ENCODE measurements at regions of chr6 and their contacts with region 1.

Region 1: GRCh38 chr6:42306439-42307140 is 88.9 kb upstream of the MRPS10 start:
- DNase-seq: no peak
- H3K4me3 ChIP-seq: no peak overlapping the region
- H3K4me3 Mint-ChIP-seq: no peak overlapping the region
- H3K27ac ChIP-seq: no peak overlapping the region
- H3K27ac Mint-ChIP-seq: peak overlapping the region in 2 of 8 donors; percentile 43 to 71
- H3K4me1 ChIP-seq: no peaks in the 10 kb centered on the region
- H3K4me1 Mint-ChIP-seq: peaks cover 32 to 68% (median 57%) of the 10 kb centered on the region in 3 donors
- H3K27me3 ChIP-seq: no peaks in the 10 kb centered on the region
- H3K27me3 Mint-ChIP-seq: peaks cover 0 to 3% of the 10 kb centered on the region in 2 donors

Region 2: GRCh38 chr6:42532038-42532669 is 225.6 kb after region 1 on chr6:
- CTCF ChIA-PET with region 1: interaction called, 17 read pairs
- POLR2A ChIA-PET with region 1: no interaction called
- DNase-seq: peak in 2 of 5 donors; percentile 26 to 36
- H3K4me3 ChIP-seq: no peak overlapping the region
- H3K4me3 Mint-ChIP-seq: no peak overlapping the region
- H3K27ac ChIP-seq: no peak overlapping the region
- H3K27ac Mint-ChIP-seq: no peak overlapping the region
- H3K4me1 ChIP-seq: no peaks in the 10 kb centered on the region
- H3K4me1 Mint-ChIP-seq: no peaks in the 10 kb centered on the region
- H3K27me3 ChIP-seq: no peaks in the 10 kb centered on the region
- H3K27me3 Mint-ChIP-seq: peaks cover 0 to 2% of the 10 kb centered on the region in 2 donors